ENCODE measurements at regions of chr4 and their contacts with region 1.

Region 1: GRCh38 chr4:128558896-128559679 is 250.4 kb upstream of the JADE1 start:
- DNase-seq: no peak
- H3K4me3 ChIP-seq: no peak overlapping the region
- H3K27ac ChIP-seq: peak overlapping the region in 2 of 5 donors; percentile 6 to 67
- H3K4me1 ChIP-seq: peaks cover 2% of the 10 kb centered on the region in 2 donors
- H3K27me3 ChIP-seq: no peaks in the 10 kb centered on the region
- CTCF ChIP-seq: no peak
- POLR2A ChIP-seq: no peak

Region 2: DNA sequence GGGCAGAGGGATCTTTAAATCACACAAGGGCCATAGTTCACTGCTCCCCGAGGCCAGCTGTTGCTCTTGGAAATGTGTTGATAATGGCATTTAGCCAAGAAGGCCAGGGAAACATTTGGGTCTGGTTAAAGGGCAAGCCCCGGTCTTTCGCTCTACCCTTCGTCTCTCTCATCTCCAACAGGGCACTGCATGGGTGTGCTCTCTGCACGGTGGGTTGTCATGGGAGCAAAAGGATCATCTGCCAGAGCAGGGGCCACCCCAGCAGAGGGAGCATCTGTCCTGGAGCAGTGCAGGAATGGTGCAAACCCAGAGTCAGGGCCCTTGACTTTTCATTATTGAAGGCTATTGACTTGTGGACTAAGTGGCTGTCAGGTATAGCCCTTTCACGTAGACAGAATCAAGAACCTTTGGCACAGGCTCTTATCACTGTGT is 248.8 kb before region 1 on chr4:
- intact Hi-C with region 1: no loop called
- DNase-seq: peak in 6 of 7 donors; percentile 3 to 57 (median 24)
- H3K4me3 ChIP-seq: no peak overlapping the region
- H3K27ac ChIP-seq: peak overlapping the region in 2 of 5 donors; percentile 13 to 31
- H3K4me1 ChIP-seq: peaks cover 11 to 14% of the 10 kb centered on the region in 2 donors
- H3K27me3 ChIP-seq: no peaks in the 10 kb centered on the region
- CTCF ChIP-seq: peak in 3 of 6 experiments; percentile 7 to 26 (median 26)
- POLR2A ChIP-seq: no peak

Region 3: DNA sequence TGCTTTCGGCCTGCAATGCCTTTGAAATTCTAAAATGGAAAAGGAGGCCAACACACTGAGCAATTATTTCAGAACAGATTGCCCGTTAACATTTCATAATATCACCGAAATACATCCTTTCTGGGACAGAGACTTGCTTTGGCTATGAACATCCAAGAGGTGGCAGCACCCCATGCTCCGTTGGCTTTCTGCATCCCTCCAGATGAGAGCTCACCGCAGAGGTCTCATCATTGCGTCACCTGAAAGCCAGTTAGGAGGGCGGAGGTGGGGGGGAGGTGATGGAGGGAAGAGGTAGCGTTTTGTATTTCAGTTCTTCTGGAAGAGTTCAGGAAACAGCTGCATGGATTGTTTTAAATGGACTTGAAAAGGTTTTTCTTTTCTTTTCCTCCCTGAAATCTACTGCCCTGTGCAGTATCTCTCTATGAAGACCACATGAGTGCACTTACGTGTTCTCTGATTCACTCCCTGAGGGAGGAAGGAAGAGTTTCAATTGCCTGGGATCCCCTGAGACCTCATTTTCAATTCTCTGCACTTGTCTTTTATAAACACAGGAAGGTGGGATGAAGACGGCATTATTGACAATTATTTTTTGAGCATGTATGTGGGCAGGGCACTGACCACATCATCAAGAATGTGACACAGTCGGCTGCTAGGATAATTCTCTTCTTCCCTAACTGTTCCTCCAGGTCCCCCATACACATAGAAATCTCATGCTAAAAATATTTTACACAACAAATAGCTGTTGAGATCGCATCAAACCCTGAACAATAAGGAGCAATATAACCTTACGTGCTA is 104.6 kb before region 1 on chr4:
- intact Hi-C with region 1: loop called (anchors 5 to 10 kb)
- DNase-seq: peak; percentile 78 to 95 (median 89)
- H3K4me3 ChIP-seq: no peak overlapping the region
- H3K27ac ChIP-seq: peak overlapping the region in 2 of 5 donors; percentile 3 to 68
- H3K4me1 ChIP-seq: peaks cover 0 to 22% of the 10 kb centered on the region in 2 donors
- H3K27me3 ChIP-seq: no peaks in the 10 kb centered on the region
- CTCF ChIP-seq: peak; percentile 66 to 90 (median 86)
- POLR2A ChIP-seq: no peak

Measured in adrenal gland (tissue), 19 donors.